Activated CD4-positive, alpha-beta memory T cell treated with anti-CD3 and anti-CD28 coated beads, Interleukin-2, amount 10 ng/mL, durations not matched to agents 7 days and 5 days (primary cell): ENCODE measurements at regions of chr15 and their contacts with region 1.

Region 1: GRCh38 chr15:100341662-100342560 is at the start of gene ADAMTS17:
- DNase-seq: peak; percentile 94
- H3K4me3 Mint-ChIP-seq: peak within 1 kb of the TSS; percentile 54
- H3K27ac Mint-ChIP-seq: no peak within 1 kb of the TSS
- H3K4me1 Mint-ChIP-seq: peaks cover 10% of the 10 kb centered on the region
- H3K27me3 Mint-ChIP-seq: peaks cover 35% of the 10 kb centered on the region
- total RNA-seq, gene ADAMTS17: 0.38 to 0.68 TPM

Region 2: GRCh38 chr15:99928429-99928981 is 413.4 kb before region 1 on chr15:
- CTCF ChIA-PET with region 1: interaction called, 11 read pairs
- POLR2A ChIA-PET with region 1: interaction called, 4 read pairs
- DNase-seq: peak; percentile 86
- H3K4me3 Mint-ChIP-seq: peak overlapping the region; percentile 79
- H3K27ac Mint-ChIP-seq: peak overlapping the region; percentile 76
- H3K4me1 Mint-ChIP-seq: peaks cover 14% of the 10 kb centered on the region
- H3K27me3 Mint-ChIP-seq: peaks cover 14% of the 10 kb centered on the region

Region 3: GRCh38 chr15:100330629-100331215 is 11.2 kb before region 1 on chr15:
- CTCF ChIA-PET with region 1: interaction called, 136 read pairs
- POLR2A ChIA-PET with region 1: interaction called, 10 read pairs
- DNase-seq: peak; percentile 49
- H3K4me3 Mint-ChIP-seq: peak overlapping the region; percentile 32
- H3K27ac Mint-ChIP-seq: peak overlapping the region; percentile 74
- H3K4me1 Mint-ChIP-seq: peaks cover 22% of the 10 kb centered on the region
- H3K27me3 Mint-ChIP-seq: no peaks in the 10 kb centered on the region